Psoas muscle (tissue), 8 donors: ENCODE measurements at regions of chr3 and their contacts with region 1.

Region 1: DNA sequence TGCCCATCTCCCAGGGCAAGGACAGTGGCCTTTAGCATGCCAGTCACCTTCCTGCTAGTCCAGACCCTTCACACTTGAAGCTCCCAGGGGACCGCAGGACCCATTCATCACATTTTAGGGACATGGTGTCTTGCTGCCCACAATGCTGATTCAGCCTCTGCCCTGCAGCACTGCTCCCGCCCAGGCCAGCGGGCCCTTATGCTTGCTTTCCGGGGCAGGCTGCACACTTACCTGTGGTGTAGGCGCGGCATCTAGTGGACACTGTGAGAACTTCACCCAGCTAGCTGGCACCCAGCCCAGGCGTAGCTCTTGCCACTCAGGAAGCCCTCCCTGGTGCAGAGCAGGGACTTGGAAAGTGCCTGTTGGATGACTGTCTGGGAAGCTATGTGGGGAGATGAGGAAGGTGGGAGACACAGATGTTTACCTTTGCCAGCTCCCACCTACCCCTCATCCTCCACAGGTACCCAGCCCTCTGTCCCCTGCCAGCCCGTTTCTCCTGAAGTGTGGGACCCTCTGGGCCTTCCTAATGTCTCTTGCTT is 26.2 kb upstream of the NR2C2 start:
- DNase-seq: peak; percentile 85 to 92
- ATAC-seq: peak; percentile 91 to 97 (median 94)
- H3K4me3 ChIP-seq: no peak overlapping the region
- H3K27ac ChIP-seq: no peak overlapping the region
- H3K4me1 ChIP-seq: no peaks in the 10 kb centered on the region
- H3K27me3 ChIP-seq: no peaks in the 10 kb centered on the region
- CTCF ChIP-seq: peak; percentile 99

Region 2: GRCh38 chr3:14633819-14634424 is 287.2 kb before region 1 on chr3:
- intact Hi-C with region 1: loop called (anchors 2 to 5 kb)
- DNase-seq: peak; percentile 55 to 77
- ATAC-seq: peak; percentile 64 to 86 (median 78)
- H3K4me3 ChIP-seq: no peak overlapping the region
- H3K27ac ChIP-seq: no peak overlapping the region
- H3K4me1 ChIP-seq: no peaks in the 10 kb centered on the region
- H3K27me3 ChIP-seq: no peaks in the 10 kb centered on the region
- CTCF ChIP-seq: peak; percentile 77

Region 3: DNA sequence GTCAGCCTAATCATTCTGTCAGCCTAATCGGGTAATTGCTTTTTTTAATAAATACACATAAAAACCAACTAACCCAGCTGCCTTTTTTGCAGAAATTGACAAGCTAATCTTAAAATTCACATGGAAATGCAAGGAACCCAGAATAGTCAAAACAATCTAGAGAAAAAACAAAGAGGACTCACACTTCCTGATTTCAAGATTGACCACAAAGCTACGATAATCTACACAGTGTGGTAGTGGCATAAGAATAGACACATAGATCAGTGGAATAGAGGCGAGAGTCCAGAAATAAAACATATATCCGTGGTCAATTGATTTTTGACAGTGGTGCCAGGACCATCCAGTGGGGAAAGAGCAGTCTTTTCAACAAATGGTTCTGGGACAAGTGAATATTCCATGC is 248.6 kb before region 1 on chr3:
- intact Hi-C with region 1: loop called (anchors 2 to 5 kb)
- DNase-seq: no peak
- ATAC-seq: no peak
- H3K4me3 ChIP-seq: no peak overlapping the region
- H3K27ac ChIP-seq: no peak overlapping the region
- H3K4me1 ChIP-seq: no peaks in the 10 kb centered on the region
- H3K27me3 ChIP-seq: no peaks in the 10 kb centered on the region
- CTCF ChIP-seq: no peak

Region 4: DNA sequence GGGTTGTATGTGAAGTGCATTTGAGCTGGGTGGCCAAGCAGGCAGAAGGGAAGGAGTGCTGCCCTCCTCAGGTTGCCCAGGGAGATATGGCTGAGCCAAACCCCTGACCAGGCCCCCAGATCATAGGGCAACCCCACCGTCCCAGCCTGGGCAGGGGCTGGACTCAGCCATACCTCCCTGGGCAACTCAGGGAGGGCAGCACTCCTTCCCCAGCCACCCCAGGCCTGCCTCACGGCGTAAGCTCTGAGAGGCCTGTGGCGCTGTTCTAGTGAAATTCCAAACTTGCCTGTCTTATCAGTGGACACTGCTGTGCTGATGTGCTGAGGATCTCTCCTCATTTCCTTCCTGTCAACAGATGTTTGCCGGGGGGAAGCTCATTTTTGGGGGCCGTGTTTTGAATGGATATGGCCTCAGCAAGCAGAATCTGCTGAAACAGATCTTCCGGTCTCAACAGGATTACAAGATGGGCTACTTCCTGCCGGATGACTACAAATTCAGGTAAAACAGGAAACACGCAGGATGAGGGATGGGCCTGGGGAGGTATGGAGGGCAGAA is 160.0 kb before region 1 on chr3:
- intact Hi-C with region 1: no loop called
- DNase-seq: no peak
- ATAC-seq: no peak
- H3K4me3 ChIP-seq: no peak overlapping the region
- H3K27ac ChIP-seq: no peak overlapping the region
- H3K4me1 ChIP-seq: no peaks in the 10 kb centered on the region
- H3K27me3 ChIP-seq: no peaks in the 10 kb centered on the region
- CTCF ChIP-seq: no peak

Region 5: GRCh38 chr3:14791343-14791945 is 129.7 kb before region 1 on chr3:
- intact Hi-C with region 1: loop called (anchors 2 to 5 kb)
- DNase-seq: peak; percentile 70 to 75
- ATAC-seq: peak; percentile 53 to 74 (median 60)
- H3K4me3 ChIP-seq: no peak overlapping the region
- H3K27ac ChIP-seq: no peak overlapping the region
- H3K4me1 ChIP-seq: no peaks in the 10 kb centered on the region
- H3K27me3 ChIP-seq: no peaks in the 10 kb centered on the region
- CTCF ChIP-seq: peak; percentile 56

Region 6: DNA sequence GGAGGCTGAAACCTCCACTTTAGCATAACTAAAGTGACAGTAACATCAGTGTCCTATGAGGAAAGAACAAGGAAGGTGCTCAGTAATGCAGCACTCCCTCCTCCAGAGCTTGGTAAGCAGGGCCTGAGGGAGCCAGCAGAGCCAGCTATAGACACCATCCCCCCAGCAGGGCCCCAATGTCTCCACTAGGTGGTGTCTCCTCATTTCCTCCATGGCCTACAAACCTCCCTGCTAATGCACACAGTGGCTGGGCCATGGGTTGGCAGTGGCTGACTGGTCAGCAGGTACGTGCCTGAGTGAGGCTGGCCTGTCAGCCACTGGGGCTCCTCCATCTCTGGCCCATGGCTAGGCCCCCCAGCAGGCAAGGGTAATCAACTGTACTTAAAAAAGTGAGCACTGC is 130.4 kb after region 1 on chr3:
- intact Hi-C with region 1: loop called in 1 of 2 experiments (anchors 10 kb)
- DNase-seq: peak in 1 of 2 donors; percentile 63
- ATAC-seq: peak; percentile 58 to 85 (median 80)
- H3K4me3 ChIP-seq: no peak overlapping the region
- H3K27ac ChIP-seq: no peak overlapping the region
- H3K4me1 ChIP-seq: no peaks in the 10 kb centered on the region
- H3K27me3 ChIP-seq: no peaks in the 10 kb centered on the region
- CTCF ChIP-seq: peak; percentile 30